Adrenal gland (tissue), 19 donors: ENCODE measurements at regions of chr12 and their contacts with region 1.

Region 1: DNA sequence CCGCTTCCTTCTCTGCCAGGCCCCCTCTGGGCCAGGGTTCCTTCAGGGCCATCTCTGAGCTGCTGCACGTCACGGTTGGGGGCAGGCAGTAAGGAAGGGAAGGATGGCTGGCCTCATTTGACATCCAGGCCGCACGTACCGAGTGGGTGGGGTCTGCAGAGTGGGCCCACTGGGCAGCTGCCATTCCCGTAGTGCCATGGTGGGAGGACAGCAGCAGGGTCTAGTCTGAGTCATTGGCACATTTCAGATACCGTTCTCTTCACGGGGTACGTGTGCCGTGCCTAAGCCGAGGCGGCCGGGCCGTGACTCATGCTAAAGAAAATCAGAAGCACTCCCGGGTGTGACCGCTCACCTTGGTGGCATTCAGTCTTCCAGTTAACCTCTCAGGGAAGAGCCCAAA is 43.9 kb downstream of the IL31 start:
- DNase-seq: peak in 1 of 7 donors; percentile 48
- H3K4me3 ChIP-seq: no peak overlapping the region
- H3K27ac ChIP-seq: peak overlapping the region in 1 of 5 donors; percentile 35
- H3K4me1 ChIP-seq: peaks cover 0 to 24% of the 10 kb centered on the region in 2 donors
- H3K27me3 ChIP-seq: no peaks in the 10 kb centered on the region
- CTCF ChIP-seq: no peak
- POLR2A ChIP-seq: no peak

Region 2: GRCh38 chr12:120879102-120879501 is 1251.0 kb before region 1 on chr12:
- intact Hi-C with region 1: no loop called
- DNase-seq: no peak
- H3K4me3 ChIP-seq: no peak overlapping the region
- H3K27ac ChIP-seq: no peak overlapping the region
- H3K4me1 ChIP-seq: peaks cover 0 to 25% of the 10 kb centered on the region in 2 donors
- H3K27me3 ChIP-seq: no peaks in the 10 kb centered on the region
- CTCF ChIP-seq: no peak
- POLR2A ChIP-seq: no peak

Region 3: DNA sequence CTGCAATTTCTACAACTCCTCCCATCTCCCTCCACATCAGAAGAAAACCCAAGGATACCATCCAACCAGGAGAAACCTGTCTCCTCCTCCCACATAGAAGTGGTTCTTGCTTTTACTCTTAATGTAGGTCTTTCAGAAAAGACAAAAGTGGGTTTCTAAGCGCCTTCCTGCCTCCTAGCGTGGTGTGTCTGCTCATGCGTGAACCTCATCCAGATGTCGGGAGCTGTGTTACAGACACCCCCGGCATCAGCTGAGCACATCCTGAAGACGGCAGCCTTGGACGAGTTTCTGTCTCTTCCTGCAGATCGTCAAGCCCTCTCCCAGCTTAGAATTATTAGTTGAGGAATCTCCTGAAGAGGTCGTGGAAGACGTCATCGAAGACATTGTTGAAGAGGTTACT is 62.3 kb after region 1 on chr12:
- intact Hi-C with region 1: loop called in 1 of 2 experiments (anchors 2 kb)
- DNase-seq: no peak
- H3K4me3 ChIP-seq: no peak overlapping the region
- H3K27ac ChIP-seq: no peak overlapping the region
- H3K4me1 ChIP-seq: no peaks in the 10 kb centered on the region
- H3K27me3 ChIP-seq: no peaks in the 10 kb centered on the region
- CTCF ChIP-seq: no peak
- POLR2A ChIP-seq: no peak